Left colon (tissue), 2 donors: ENCODE measurements at regions of chr18 and their contacts with region 1.

Region 1: GRCh38 chr18:41244591-41245037 is 710.4 kb upstream of the PIK3C3 start:
- DNase-seq: no peak
- ATAC-seq: no peak

Region 2: DNA sequence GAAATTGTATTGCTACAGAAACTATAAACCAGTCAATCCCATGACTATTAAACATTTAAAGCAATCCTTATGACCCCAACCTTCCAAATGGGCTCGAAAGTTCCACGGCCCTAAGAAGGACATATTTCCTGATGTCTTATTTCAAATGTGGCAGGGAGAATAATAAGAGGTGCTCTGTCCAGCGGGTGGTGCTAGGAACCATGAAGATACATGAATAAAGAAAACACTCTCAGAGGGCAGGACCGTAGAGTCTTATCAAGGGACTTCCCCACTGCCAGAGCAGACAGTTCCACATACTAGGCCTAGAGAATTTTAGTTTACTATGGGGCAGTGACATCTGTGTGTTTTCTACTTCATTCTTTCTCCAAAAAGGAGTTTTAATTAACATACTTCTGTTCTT is 523.3 kb after region 1 on chr18:
- intact Hi-C with region 1: loop called in 1 of 2 experiments (anchors 10 kb)
- DNase-seq: no peak
- ATAC-seq: no peak